Ovary (tissue), 10 donors: ENCODE measurements at regions of chr21 and their contacts with region 1.

Region 1: DNA sequence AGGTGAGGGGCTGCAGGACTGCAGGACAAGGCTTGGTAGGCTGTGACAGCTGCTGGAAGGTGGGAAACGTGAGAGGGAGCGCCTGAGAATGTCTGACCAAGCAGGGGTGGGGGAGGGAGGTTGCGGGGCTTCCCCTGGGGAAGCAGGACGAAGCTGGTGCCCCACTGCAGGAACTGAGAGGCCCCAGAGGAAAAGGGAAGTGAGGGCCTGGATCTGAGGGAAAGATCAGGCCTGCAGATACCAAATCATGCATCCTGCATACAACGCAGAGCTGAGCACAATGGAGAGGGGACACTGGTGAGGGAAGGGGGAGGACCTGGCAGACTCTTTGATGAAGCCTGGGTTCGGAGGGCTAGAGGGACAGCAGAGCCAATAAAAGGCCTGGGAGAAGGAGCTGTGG is 65.7 kb upstream of the BACE2 start:
- DNase-seq: no peak
- H3K4me3 ChIP-seq: no peak overlapping the region
- H3K27ac ChIP-seq: no peak overlapping the region
- H3K4me1 ChIP-seq: no peaks in the 10 kb centered on the region
- H3K27me3 ChIP-seq: no peaks in the 10 kb centered on the region
- CTCF ChIP-seq: no peak
- EP300 ChIP-seq: no peak
- POLR2A ChIP-seq: no peak

Region 2: DNA sequence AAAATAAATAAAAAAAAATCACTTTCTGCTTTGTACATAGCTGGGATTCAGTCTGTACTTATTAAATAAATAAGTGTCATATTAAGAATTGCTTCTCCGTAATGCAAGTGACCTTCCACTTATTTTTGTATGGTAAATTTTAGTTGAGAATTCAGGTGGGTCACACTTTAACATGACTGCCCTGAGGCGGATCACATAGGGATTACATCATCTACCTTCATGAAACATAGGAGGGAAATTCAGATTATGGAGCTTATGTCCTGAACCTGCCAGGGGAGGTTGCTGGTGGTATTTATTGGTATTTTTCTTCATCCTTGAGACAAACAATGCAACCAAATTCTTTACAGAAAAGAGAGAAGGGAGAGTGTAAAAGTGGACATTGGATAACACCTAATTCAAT is 319.5 kb before region 1 on chr21:
- intact Hi-C with region 1: no loop called
- DNase-seq: no peak
- H3K4me3 ChIP-seq: no peak overlapping the region
- H3K27ac ChIP-seq: no peak overlapping the region
- H3K4me1 ChIP-seq: no peaks in the 10 kb centered on the region
- H3K27me3 ChIP-seq: no peaks in the 10 kb centered on the region
- CTCF ChIP-seq: no peak
- EP300 ChIP-seq: no peak
- POLR2A ChIP-seq: no peak

Region 3: GRCh38 chr21:41045534-41046268 is 56.6 kb before region 1 on chr21:
- intact Hi-C with region 1: loop called in 1 of 4 experiments (anchors 10 kb)
- DNase-seq: no peak
- H3K4me3 ChIP-seq: no peak overlapping the region
- H3K27ac ChIP-seq: no peak overlapping the region
- H3K4me1 ChIP-seq: no peaks in the 10 kb centered on the region
- H3K27me3 ChIP-seq: no peaks in the 10 kb centered on the region
- CTCF ChIP-seq: no peak
- EP300 ChIP-seq: no peak
- POLR2A ChIP-seq: no peak

Region 4: GRCh38 chr21:41071258-41072171 is 30.8 kb before region 1 on chr21:
- intact Hi-C with region 1: no loop called
- DNase-seq: no peak
- H3K4me3 ChIP-seq: no peak overlapping the region
- H3K27ac ChIP-seq: no peak overlapping the region
- H3K4me1 ChIP-seq: no peaks in the 10 kb centered on the region
- H3K27me3 ChIP-seq: no peaks in the 10 kb centered on the region
- CTCF ChIP-seq: no peak
- EP300 ChIP-seq: no peak
- POLR2A ChIP-seq: no peak